Natural killer cell (primary cell): ENCODE measurements at regions of chr1 and their contacts with region 1.

Region 1: GRCh38 chr1:110879758-110880606 is 7.0 kb downstream of the CD53 start:
- DNase-seq: peak; percentile 42 to 78
- ATAC-seq: peak; percentile 60 to 79 (median 67)
- H3K4me3 ChIP-seq: peak overlapping the region; percentile 8
- H3K4me3 Mint-ChIP-seq: peak overlapping the region; percentile 99
- H3K27ac ChIP-seq: peak overlapping the region; percentile 86
- H3K27ac Mint-ChIP-seq: peak overlapping the region; percentile 92 to 99
- H3K4me1 ChIP-seq: peaks cover 35% of the 10 kb centered on the region
- H3K4me1 Mint-ChIP-seq: peaks cover 75 to 99% of the 10 kb centered on the region in 2 donors
- H3K27me3 ChIP-seq: no peaks in the 10 kb centered on the region
- H3K27me3 Mint-ChIP-seq: no peaks in the 10 kb centered on the region
- CTCF ChIP-seq: no peak

Region 2: DNA sequence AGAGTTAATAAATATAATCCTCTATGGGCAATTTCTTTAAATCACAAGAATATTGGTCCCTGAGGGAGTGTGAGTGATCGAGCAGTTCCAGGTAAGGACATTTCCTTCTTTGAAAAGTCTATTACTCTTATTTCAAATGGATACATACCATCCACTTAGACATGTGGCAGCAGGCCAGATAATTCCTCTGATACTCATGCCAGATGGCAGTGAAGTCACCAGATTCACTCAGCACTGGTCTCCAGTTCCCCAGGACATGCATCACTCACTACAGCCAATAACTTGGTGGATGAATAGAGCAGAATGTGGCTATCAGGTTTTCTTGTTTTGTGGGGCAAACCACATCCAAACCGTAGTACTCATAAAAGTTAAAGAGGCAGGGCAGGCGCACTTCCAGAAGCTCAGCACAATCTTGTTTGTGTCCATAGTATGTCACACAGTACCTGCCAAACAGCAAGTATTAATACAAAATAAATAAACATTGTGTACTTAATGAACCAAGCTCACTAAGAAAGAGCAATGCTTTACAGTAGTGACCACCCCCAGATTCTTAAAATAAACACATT is 81.2 kb before region 1 on chr1:
- intact Hi-C with region 1: no loop called
- DNase-seq: no peak
- ATAC-seq: no peak
- H3K4me3 ChIP-seq: no peak overlapping the region
- H3K4me3 Mint-ChIP-seq: no peak overlapping the region
- H3K27ac ChIP-seq: no peak overlapping the region
- H3K27ac Mint-ChIP-seq: no peak overlapping the region
- H3K4me1 ChIP-seq: no peaks in the 10 kb centered on the region
- H3K4me1 Mint-ChIP-seq: no peaks in the 10 kb centered on the region
- H3K27me3 ChIP-seq: no peaks in the 10 kb centered on the region
- H3K27me3 Mint-ChIP-seq: peaks cover 2 to 8% of the 10 kb centered on the region in 2 donors
- CTCF ChIP-seq: no peak

Region 3: DNA sequence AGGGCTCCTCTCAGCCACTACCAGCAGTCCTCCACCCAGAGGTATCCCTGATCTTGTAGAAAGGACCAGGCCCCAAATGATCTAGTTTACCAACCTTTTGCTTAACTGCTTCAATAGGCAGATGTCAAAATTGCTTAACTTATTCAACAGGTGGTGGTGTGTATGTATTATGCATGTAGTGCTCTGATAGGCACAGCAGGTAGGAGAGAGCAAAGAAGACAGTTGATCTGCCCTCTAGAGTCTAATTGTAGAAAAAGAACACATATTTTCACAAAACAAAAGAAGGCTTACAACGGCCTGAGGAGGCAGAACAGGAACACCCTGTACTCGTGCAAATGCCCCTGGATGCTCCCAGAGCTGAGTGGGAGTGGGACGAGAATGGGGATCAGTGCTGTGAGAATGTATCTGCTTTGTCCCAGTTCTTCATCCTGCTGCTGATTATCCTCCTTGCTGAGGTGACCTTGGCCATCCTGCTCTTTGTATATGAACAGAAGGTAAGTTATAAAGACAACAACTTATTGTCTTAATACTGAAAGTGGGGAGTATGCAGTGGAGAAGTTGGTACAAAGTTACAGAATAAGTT is 14.0 kb after region 1 on chr1:
- intact Hi-C with region 1: loop called (anchors 1 kb)
- DNase-seq: peak in 1 of 2 donors; percentile 32
- ATAC-seq: peak in 2 of 3 donors; percentile 16 to 36
- H3K4me3 ChIP-seq: no peak overlapping the region
- H3K4me3 Mint-ChIP-seq: peak overlapping the region; percentile 4
- H3K27ac ChIP-seq: no peak overlapping the region
- H3K27ac Mint-ChIP-seq: peak overlapping the region; percentile 86 to 99
- H3K4me1 ChIP-seq: peaks cover 63% of the 10 kb centered on the region
- H3K4me1 Mint-ChIP-seq: peaks cover 91 to 96% of the 10 kb centered on the region in 2 donors
- H3K27me3 ChIP-seq: no peaks in the 10 kb centered on the region
- H3K27me3 Mint-ChIP-seq: no peaks in the 10 kb centered on the region
- CTCF ChIP-seq: peak; percentile 11